Transverse colon (tissue), 4 donors: ENCODE measurements at regions of chr4 and their contacts with region 1.

Region 1: GRCh38 chr4:140861359-140862176 is 105.4 kb upstream of the TBC1D9 start:
- DNase-seq: peak; percentile 60
- H3K4me3 ChIP-seq: no peak overlapping the region
- H3K27ac ChIP-seq: no peak overlapping the region
- H3K4me1 ChIP-seq: no peaks in the 10 kb centered on the region
- H3K27me3 ChIP-seq: no peaks in the 10 kb centered on the region
- CTCF ChIP-seq: peak; percentile 65 to 74 (median 69)
- EP300 ChIP-seq: no peak
- POLR2A ChIP-seq: no peak

Region 2: DNA sequence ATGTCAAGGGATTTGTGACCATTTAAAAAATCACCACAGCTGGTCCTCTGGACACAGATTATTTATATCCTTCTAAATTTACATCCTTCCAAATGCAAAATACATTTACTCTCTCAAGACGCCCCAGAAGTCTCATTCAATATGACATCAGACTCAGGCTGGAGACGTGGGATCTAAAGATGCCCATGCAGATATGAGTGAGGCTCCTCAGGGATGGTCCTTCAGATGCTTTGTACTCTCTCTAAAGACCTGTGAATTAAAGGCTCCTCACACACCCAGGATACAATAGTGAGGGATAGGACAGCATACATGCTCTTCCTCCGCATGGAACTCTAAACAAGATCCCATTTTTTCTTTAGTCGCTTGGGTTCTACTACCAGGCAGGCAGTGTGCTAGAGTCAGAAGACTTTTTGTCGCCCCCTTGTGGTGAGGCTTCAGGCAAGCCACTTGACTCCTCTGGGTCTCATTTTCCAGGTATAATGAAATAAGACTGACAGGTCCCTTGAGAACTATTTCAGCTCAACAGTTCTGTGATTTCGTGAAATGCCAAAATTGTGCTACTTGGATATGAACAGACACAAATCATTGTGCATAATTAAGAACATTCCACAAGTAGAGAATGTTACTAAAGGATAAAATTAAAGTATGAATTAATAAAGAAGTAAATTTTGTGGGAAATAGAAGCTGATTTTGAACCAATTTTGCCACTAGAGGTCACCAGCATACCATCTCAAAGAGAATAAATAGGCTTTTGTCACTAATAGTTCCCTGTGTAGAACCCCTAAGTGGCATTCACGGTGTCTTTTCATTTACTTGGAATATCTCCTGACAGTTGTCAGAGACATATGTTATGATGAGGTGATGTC is 501.8 kb before region 1 on chr4:
- in situ Hi-C with region 1: loop called in 2 of 4 experiments (anchors 25 kb)
- intact Hi-C with region 1: no loop called
- DNase-seq: peak; percentile 82
- H3K4me3 ChIP-seq: no peak overlapping the region
- H3K27ac ChIP-seq: no peak overlapping the region
- H3K4me1 ChIP-seq: peaks cover 0 to 28% (median 11%) of the 10 kb centered on the region in 4 donors
- H3K27me3 ChIP-seq: no peaks in the 10 kb centered on the region
- CTCF ChIP-seq: peak; percentile 76 to 86 (median 84)
- EP300 ChIP-seq: no peak
- POLR2A ChIP-seq: no peak

Region 3: GRCh38 chr4:140395668-140396067 is 465.9 kb before region 1 on chr4:
- in situ Hi-C with region 1: loop called in 1 of 4 experiments (anchors 25 kb)
- intact Hi-C with region 1: no loop called
- DNase-seq: no peak
- H3K4me3 ChIP-seq: no peak overlapping the region
- H3K27ac ChIP-seq: no peak overlapping the region
- H3K4me1 ChIP-seq: no peaks in the 10 kb centered on the region
- H3K27me3 ChIP-seq: no peaks in the 10 kb centered on the region
- CTCF ChIP-seq: no peak
- EP300 ChIP-seq: no peak
- POLR2A ChIP-seq: no peak

Region 4: GRCh38 chr4:140595065-140595464 is 266.5 kb before region 1 on chr4:
- in situ Hi-C with region 1: loop called in 2 of 4 experiments (anchors 10 to 25 kb)
- intact Hi-C with region 1: no loop called
- DNase-seq: peak; percentile 41
- H3K4me3 ChIP-seq: no peak overlapping the region
- H3K27ac ChIP-seq: no peak overlapping the region
- H3K4me1 ChIP-seq: no peaks in the 10 kb centered on the region
- H3K27me3 ChIP-seq: no peaks in the 10 kb centered on the region
- CTCF ChIP-seq: peak; percentile 48 to 70 (median 56)
- EP300 ChIP-seq: no peak
- POLR2A ChIP-seq: no peak

Region 5: GRCh38 chr4:140903522-140904475 is 42.2 kb after region 1 on chr4:
- in situ Hi-C with region 1: no loop called
- intact Hi-C with region 1: no loop called
- DNase-seq: no peak
- H3K4me3 ChIP-seq: no peak overlapping the region
- H3K27ac ChIP-seq: no peak overlapping the region
- H3K4me1 ChIP-seq: no peaks in the 10 kb centered on the region
- H3K27me3 ChIP-seq: no peaks in the 10 kb centered on the region
- CTCF ChIP-seq: no peak
- EP300 ChIP-seq: no peak
- POLR2A ChIP-seq: no peak

Region 6: GRCh38 chr4:141133146-141133998 is 271.8 kb after region 1 on chr4 and contains the start of gene RNF150:
- in situ Hi-C with region 1: loop called in 2 of 4 experiments (anchors 10 kb)
- intact Hi-C with region 1: loop called (anchors 1 kb)
- DNase-seq: peak; percentile 58
- H3K4me3 ChIP-seq: peak within 1 kb of the TSS; percentile 36 to 89 (median 58)
- H3K27ac ChIP-seq: peak within 1 kb of the TSS; percentile 81 to 86 (median 84)
- H3K4me1 ChIP-seq: peaks cover 0 to 18% (median 8%) of the 10 kb centered on the region in 4 donors
- H3K27me3 ChIP-seq: peaks cover 62% of the 10 kb centered on the region
- CTCF ChIP-seq: peak; percentile 47 to 62 (median 54)
- EP300 ChIP-seq: no peak
- POLR2A ChIP-seq: no peak
- total RNA-seq, gene RNF150: 2.8 to 15.3 (median 7.9) TPM

Region 7: GRCh38 chr4:141283563-141283962 is 422.0 kb after region 1 on chr4:
- in situ Hi-C with region 1: no loop called
- intact Hi-C with region 1: no loop called
- DNase-seq: no peak
- H3K4me3 ChIP-seq: no peak overlapping the region
- H3K27ac ChIP-seq: no peak overlapping the region
- H3K4me1 ChIP-seq: no peaks in the 10 kb centered on the region
- H3K27me3 ChIP-seq: no peaks in the 10 kb centered on the region
- CTCF ChIP-seq: no peak
- EP300 ChIP-seq: no peak
- POLR2A ChIP-seq: no peak